Activated CD8-positive, alpha-beta T cell treated with anti-CD3 and anti-CD28 coated beads for 36 hours (primary cell): ENCODE measurements at regions of chr2 and their contacts with region 1.

Region 1: GRCh38 chr2:8681786-8682692 is at the start of gene ID2:
- DNase-seq: peak; percentile 99
- ATAC-seq: peak; percentile 76
- H3K4me3 Mint-ChIP-seq: peak within 1 kb of the TSS; percentile 95
- H3K27ac Mint-ChIP-seq: peak within 1 kb of the TSS; percentile 92
- H3K4me1 Mint-ChIP-seq: peaks cover 40% of the 10 kb centered on the region
- H3K27me3 Mint-ChIP-seq: peaks cover 10% of the 10 kb centered on the region
- CTCF ChIP-seq: no peak
- total RNA-seq, gene ID2: 85.7 to 91.6 TPM

Region 2: DNA sequence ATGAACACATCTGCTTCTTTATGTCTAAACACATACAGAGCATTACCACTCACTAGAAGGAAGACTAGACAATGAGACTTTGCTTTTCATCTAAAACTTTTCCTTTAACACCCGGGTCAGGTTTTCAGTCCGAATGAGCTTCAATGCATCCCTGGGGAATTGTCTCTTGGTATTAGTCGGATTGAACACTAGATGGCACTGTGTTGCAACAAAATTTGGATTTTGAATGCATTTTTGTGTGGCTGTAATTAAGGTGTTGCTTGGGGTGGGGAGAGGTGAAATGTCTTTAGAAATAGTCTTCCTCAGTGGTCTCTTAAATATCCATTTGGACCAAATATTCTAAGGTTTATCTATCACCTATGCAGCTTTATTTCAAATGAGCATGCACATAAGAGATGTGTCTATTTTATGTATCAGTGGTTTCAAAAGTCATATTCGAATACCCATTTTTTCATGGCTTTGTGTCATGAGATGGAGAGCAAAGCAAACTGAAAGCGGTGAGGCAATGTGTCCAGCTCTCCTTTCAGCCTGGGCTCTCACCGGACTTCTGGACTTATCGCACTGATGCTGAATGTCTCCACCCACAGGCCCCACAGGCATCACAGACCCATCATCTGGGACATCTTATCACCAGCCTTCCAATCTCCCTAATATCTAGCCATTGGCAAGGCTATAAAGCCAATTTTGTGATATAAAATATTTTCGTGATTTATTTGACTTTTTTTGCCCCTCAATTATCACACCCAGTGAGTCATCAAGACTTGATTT is 1254.6 kb before region 1 on chr2:
- CTCF ChIA-PET with region 1: interaction called, 4 read pairs
- POLR2A ChIA-PET with region 1: interaction called, 15 read pairs
- intact Hi-C with region 1: loop called (anchors 5 kb)
- DNase-seq: no peak
- ATAC-seq: peak; percentile 7
- H3K4me3 Mint-ChIP-seq: peak overlapping the region; percentile 24
- H3K27ac Mint-ChIP-seq: peak overlapping the region; percentile 74
- H3K4me1 Mint-ChIP-seq: peaks cover 41% of the 10 kb centered on the region
- H3K27me3 Mint-ChIP-seq: peaks cover 2% of the 10 kb centered on the region
- CTCF ChIP-seq: peak; percentile 92

Region 3: DNA sequence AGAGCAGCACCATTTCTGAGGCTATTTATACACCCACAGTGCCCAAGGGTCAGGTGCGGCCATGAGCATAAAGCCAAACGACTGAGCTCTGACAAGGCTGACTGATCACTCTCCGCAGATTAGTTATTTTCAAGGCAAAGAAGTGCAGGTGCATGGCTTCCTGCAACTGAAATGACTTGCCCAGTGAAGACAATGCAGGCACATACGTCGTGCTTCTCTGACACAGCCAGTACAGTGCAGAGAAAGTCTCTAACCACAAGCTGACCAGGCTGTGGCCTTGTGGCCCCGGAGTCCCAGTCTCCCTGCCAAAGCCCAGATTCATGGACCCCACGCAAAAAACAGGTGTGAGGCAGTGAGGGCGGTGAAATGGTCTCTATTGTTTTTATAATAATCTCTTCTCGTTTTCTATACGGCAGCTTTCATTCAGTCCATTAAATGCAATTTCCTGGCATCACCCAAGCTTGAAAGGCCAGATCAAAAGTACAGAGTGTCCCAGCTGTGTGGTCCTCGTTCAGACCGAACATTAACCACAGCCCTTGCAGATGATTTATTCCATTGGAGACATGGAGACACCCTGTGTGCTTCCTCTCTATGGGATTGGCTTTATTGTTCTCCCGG is 447.2 kb before region 1 on chr2:
- CTCF ChIA-PET with region 1: no interaction called
- POLR2A ChIA-PET with region 1: no interaction called
- intact Hi-C with region 1: loop called (anchors 5 kb)
- DNase-seq: no peak
- ATAC-seq: no peak
- H3K4me3 Mint-ChIP-seq: no peak overlapping the region
- H3K27ac Mint-ChIP-seq: no peak overlapping the region
- H3K4me1 Mint-ChIP-seq: peaks cover 17% of the 10 kb centered on the region
- H3K27me3 Mint-ChIP-seq: peaks cover 14% of the 10 kb centered on the region
- CTCF ChIP-seq: no peak

Region 4: GRCh38 chr2:8488001-8488738 is 193.9 kb before region 1 on chr2:
- CTCF ChIA-PET with region 1: no interaction called
- POLR2A ChIA-PET with region 1: interaction called, 15 read pairs
- intact Hi-C with region 1: no loop called
- DNase-seq: peak; percentile 89
- ATAC-seq: peak; percentile 84
- H3K4me3 Mint-ChIP-seq: peak overlapping the region; percentile 66
- H3K27ac Mint-ChIP-seq: peak overlapping the region; percentile 79
- H3K4me1 Mint-ChIP-seq: peaks cover 47% of the 10 kb centered on the region
- H3K27me3 Mint-ChIP-seq: peaks cover 6% of the 10 kb centered on the region
- CTCF ChIP-seq: no peak

Region 5: GRCh38 chr2:8583400-8584173 is 98.5 kb before region 1 on chr2:
- CTCF ChIA-PET with region 1: interaction called, 3 read pairs
- POLR2A ChIA-PET with region 1: interaction called, 4 read pairs
- intact Hi-C with region 1: loop called (anchors 5 kb)
- DNase-seq: peak; percentile 93
- ATAC-seq: peak; percentile 82
- H3K4me3 Mint-ChIP-seq: peak overlapping the region; percentile 52
- H3K27ac Mint-ChIP-seq: peak overlapping the region; percentile 46
- H3K4me1 Mint-ChIP-seq: peaks cover 54% of the 10 kb centered on the region
- H3K27me3 Mint-ChIP-seq: peaks cover 3% of the 10 kb centered on the region
- CTCF ChIP-seq: no peak